PC-9 (cell line): ENCODE measurements at regions of chr15 and their contacts with region 1.

Region 1: DNA sequence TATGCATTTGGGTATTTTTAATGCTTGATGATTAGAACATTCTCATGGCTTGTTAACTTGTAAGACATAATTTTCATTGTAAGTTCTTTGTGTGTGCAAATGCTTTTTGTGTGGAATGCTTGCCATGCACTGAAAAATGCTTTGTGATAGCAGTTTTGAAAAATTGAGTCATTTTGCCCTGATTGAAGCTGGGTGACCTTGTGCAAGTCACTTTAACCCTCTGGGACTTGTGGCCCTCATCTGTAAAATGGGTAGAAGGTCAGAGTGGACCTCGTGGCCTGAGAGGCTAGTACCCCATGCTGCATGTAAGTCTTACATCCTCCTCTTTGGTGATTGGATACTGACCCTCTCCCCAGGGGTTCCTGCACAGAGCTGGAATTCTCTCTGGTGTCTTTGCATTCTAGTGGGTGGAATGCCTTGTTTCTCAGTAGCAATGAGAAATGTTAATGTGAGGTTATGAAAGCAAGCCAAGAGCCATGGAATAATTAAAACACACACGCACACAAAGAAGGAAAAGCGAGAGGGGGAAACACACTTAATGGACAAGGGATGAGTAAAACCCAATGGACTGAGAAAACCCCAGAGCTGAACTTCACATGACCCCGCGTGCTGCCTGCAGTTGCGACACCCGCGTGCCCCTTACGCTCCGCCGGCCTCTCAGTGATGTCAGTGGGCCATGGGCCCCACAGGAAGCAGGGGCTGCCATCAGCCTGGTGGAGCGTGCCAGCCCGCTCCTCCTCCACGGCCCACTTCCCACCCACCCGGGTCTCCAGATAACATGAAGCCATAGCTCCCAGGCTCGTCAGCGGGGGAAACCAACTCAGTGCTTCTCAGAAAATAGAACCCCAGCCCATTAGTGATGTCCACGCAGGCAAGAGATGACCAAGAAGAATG is 44.0 kb downstream of the SMAD3 start:
- DNase-seq: peak in 1 of 2 experiments; percentile 36
- H3K4me3 ChIP-seq: no peak overlapping the region
- H3K27ac ChIP-seq: peak overlapping the region; percentile 100
- H3K4me1 ChIP-seq: peaks cover 67% of the 10 kb centered on the region
- H3K27me3 ChIP-seq: no peaks in the 10 kb centered on the region
- CTCF ChIP-seq: no peak

Region 2: DNA sequence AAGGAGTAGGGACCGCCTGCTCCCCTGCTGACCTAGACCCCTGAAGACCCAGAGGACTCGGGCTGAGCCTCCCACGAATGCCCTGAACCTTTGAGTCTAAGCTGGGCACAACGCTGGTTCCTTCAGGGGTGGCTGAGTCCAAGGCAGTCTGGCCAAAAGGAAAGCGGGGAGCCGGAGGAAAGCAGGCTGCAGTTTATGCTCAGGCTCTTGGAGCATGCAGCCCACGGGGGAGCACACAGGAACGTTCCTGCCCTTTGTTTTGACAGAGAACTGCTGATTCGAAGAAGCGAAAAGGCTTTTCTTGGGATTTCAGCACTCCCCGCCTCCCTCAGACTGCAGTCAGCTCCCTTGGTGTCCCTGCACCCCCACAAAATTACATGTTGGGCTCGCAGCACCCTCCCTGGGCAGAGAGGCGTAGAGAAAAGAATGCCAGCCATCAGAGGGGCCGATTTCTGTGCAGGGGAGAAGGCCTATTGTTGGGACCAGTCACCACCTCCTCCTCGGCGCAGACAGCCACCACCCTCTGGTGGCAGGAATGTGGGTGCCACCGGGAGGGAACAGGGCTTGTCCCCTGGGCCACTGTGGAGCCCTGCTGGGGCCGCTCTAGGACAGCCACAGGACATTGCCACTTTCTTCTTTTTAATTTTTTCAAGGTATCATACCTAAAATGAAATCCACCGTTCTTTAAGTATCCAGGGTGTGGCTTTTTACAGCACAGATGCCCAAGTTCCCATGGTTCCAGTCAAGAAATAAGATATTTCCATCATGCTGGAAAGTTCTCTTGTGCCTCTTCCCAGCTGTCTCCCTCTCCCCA is 335.2 kb before region 1 on chr15:
- CTCF ChIA-PET with region 1: no interaction called
- POLR2A ChIA-PET with region 1: interaction called, 25 read pairs
- intact Hi-C with region 1: no loop called
- DNase-seq: peak; percentile 66 to 92
- H3K4me3 ChIP-seq: no peak overlapping the region
- H3K27ac ChIP-seq: no peak overlapping the region
- H3K4me1 ChIP-seq: peaks cover 27% of the 10 kb centered on the region
- H3K27me3 ChIP-seq: no peaks in the 10 kb centered on the region
- CTCF ChIP-seq: peak; percentile 94

Region 3: GRCh38 chr15:66946578-66947164 is 162.7 kb before region 1 on chr15:
- CTCF ChIA-PET with region 1: interaction called, 6 read pairs
- POLR2A ChIA-PET with region 1: no interaction called
- intact Hi-C with region 1: loop called (anchors 2 kb)
- DNase-seq: peak; percentile 44 to 72
- H3K4me3 ChIP-seq: no peak overlapping the region
- H3K27ac ChIP-seq: no peak overlapping the region
- H3K4me1 ChIP-seq: peaks cover 17% of the 10 kb centered on the region
- H3K27me3 ChIP-seq: no peaks in the 10 kb centered on the region
- CTCF ChIP-seq: peak; percentile 89

Region 4: GRCh38 chr15:66981771-66982170 is 127.6 kb before region 1 on chr15:
- CTCF ChIA-PET with region 1: no interaction called
- POLR2A ChIA-PET with region 1: no interaction called
- intact Hi-C with region 1: no loop called
- DNase-seq: no peak
- H3K4me3 ChIP-seq: no peak overlapping the region
- H3K27ac ChIP-seq: no peak overlapping the region
- H3K4me1 ChIP-seq: no peaks in the 10 kb centered on the region
- H3K27me3 ChIP-seq: no peaks in the 10 kb centered on the region
- CTCF ChIP-seq: no peak

Region 5: GRCh38 chr15:67083090-67083762 is 26.2 kb before region 1 on chr15:
- CTCF ChIA-PET with region 1: interaction called, 5 read pairs
- POLR2A ChIA-PET with region 1: interaction called, 19 read pairs
- intact Hi-C with region 1: no loop called
- DNase-seq: no peak
- H3K4me3 ChIP-seq: no peak overlapping the region
- H3K27ac ChIP-seq: peak overlapping the region; percentile 9; the same call in 1 of the 2 replicates
- H3K4me1 ChIP-seq: peaks cover 95% of the 10 kb centered on the region
- H3K27me3 ChIP-seq: no peaks in the 10 kb centered on the region
- CTCF ChIP-seq: no peak

Region 6: DNA sequence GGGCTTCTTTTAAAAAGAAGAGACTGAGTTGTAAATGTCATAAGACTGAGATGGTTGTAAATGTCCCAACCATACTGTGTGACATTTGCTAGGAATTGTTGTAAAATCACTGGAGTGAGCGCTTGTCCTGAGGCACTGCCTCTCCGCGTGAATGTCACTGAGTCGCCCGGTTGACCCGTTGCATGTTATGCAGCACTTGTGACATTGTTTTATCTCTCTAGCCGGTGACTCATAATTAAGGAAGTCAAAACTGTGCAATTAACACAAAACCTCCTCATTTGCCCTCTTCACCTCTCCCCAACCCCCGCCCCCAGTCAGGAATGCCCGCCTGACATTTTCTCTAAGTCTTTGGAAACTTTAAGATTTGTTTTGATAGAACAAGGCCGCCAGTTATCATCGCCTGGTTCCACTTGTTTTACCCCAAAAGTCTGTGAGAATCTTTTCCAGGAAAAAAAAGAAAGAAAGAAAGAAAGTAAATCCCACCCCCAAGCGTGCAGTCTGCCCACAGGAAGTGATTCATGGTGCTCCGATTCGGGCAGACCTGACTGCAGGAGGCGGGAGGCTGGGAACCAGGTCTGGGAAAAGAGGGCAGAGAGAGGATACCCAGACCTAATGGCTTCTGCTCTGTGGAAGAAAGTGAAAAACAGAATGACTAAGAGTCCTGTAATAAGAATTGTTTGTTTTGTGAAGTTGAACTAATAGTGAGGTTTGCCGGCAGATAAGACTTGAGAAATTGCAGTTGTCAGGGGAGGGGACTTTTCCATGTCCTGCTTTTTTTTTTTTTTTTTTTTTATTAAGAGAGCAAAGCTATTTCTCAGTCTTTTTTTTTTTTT is 40.9 kb after region 1 on chr15:
- CTCF ChIA-PET with region 1: no interaction called
- POLR2A ChIA-PET with region 1: interaction called, 9 read pairs
- intact Hi-C with region 1: loop called (anchors 1 kb)
- DNase-seq: peak; percentile 90 to 97
- H3K4me3 ChIP-seq: peak overlapping the region; percentile 42; the same call in 1 of the 2 replicates
- H3K27ac ChIP-seq: peak overlapping the region; percentile 96
- H3K4me1 ChIP-seq: peaks cover 77% of the 10 kb centered on the region
- H3K27me3 ChIP-seq: no peaks in the 10 kb centered on the region
- CTCF ChIP-seq: no peak

Region 7: DNA sequence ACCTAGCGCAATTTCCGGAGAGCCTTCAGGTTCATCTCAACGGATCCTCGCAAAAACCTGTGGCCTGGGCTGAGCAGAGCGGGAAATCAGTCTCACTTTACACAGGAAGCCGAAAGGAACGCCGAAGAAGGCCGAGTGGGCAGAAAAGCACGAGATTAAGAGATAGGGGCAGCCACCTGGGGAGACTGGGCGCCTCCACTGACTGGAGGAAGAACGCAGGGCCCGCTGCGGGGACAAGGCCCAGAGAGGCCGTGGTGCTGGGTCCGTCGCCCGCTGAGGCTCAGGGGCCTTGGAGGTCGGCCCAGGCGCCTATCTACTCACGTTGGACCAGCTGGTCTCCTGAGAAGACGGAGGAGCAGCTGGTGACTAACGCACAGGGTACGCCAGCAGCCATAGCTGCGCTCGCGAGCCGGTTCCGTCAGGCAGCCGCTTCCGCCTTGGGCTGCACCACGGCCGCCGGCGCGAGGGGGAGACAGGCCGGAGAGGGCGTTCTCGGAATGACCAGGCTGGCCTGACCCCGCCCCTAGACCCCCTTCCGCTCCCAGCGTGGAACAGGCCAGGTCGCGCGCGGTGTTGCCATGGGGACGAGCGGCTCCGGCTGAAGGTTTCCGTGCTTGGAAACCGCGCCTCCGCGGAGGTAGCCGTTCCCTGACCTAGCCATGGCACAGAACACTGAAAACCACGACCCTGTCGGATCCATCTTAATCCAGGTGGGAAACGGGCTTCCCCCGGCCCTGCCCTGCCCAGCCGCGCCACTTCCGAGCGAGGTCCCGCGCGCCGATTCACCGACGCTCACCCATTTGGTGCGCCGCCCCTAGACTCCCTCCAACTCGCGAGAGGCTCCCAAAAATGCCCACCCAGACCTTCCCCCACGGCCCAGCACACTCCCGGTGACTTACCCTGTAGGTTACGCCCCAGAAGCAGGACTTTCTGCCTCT is 145.1 kb after region 1 on chr15 and contains the starts of genes AAGAB and IQCH:
- CTCF ChIA-PET with region 1: no interaction called
- POLR2A ChIA-PET with region 1: no interaction called
- intact Hi-C with region 1: loop called (anchors 1 kb)
- DNase-seq: peak; percentile 88 to 99
- H3K4me3 ChIP-seq: peak within 1 kb of the TSS; percentile 99
- H3K27ac ChIP-seq: peak within 1 kb of the TSS; percentile 86
- H3K4me1 ChIP-seq: peaks cover 14% of the 10 kb centered on the region
- H3K27me3 ChIP-seq: no peaks in the 10 kb centered on the region
- CTCF ChIP-seq: no peak
- total RNA-seq, gene AAGAB: 42.2 and 56.5 TPM in 2 replicates
- total RNA-seq, gene IQCH: 7.5 and 8.6 TPM in 2 replicates